Mammary epithelial cell (primary cell): ENCODE measurements at regions of chr20 and their contacts with region 1.

Region 1: DNA sequence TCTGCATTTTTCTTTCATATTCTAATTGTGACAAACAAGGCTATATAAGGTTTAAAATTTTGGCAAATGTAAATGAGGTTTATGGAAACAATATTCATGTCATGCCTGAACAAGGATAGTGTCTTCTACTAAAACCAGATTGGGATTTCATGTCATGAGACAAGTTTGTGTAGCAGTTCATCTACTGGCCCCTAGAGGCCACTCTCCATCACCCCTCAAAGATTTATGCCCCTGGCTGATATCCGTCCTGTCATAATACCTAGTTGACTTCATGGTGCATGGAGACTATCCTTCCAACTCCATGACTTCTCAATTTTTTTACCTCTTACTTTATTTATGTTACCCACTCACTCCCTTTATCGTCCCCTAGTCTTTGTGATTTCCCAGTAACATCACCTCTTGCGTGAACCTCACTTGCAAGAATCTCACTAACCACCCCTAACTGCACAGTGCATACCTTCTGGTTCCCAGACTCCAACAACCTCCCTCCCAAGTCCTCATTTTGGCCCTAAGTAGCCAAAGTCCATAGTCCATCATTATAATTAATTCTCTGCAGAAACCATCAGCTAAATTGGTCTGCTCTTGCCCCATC is 179.8 kb downstream of the TASP1 start:
- DNase-seq: peak; percentile 35
- H3K4me3 ChIP-seq: no peak overlapping the region
- H3K27ac ChIP-seq: no peak overlapping the region
- H3K4me1 ChIP-seq: peaks cover 8% of the 10 kb centered on the region
- H3K27me3 ChIP-seq: no peaks in the 10 kb centered on the region
- CTCF ChIP-seq: peak; percentile 85 to 91

Region 2: GRCh38 chr20:13325033-13325432 is 133.9 kb before region 1 on chr20:
- CTCF ChIA-PET with region 1: interaction called, 3 read pairs
- dilution Hi-C with region 1: no loop called
- in situ Hi-C with region 1: no loop called
- intact Hi-C with region 1: loop called (anchors 5 kb)
- DNase-seq: no peak
- H3K4me3 ChIP-seq: no peak overlapping the region
- H3K27ac ChIP-seq: no peak overlapping the region
- H3K4me1 ChIP-seq: no peaks in the 10 kb centered on the region
- H3K27me3 ChIP-seq: no peaks in the 10 kb centered on the region
- CTCF ChIP-seq: peak; percentile 37 to 72

Region 3: DNA sequence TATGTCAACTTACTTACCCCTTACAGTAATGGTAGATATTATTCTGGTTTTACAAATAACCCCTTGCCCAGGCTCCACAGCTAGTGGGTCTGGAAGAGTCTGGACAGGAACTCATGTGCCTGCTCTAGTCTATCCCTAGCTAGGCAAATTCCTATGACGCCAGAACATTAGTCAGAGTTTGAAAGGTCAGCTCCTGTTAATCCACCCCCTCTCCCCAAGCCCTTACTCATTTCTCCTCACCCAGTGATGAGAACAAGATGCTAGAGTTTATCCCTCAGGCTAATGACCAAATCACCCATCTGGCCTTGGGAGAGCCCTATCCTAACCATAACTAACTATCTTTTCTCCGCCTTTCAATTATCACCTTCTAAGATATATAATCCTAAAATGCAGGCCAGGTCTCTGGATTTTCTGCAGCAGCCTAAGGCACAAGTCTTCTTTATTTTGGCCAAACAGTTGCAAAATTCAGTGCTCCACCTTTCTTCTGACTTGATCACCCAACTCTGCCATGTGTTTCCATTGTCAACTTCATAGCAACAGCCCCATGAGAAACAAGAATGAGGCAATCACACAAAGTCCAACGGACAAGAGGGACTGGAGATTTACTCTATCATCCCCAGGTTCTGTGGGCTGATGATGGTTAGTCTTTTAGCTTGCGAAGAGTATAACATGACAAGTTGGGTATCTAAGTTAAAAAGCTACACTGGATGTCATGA is 66.4 kb after region 1 on chr20:
- CTCF ChIA-PET with region 1: no interaction called
- dilution Hi-C with region 1: no loop called
- in situ Hi-C with region 1: no loop called
- intact Hi-C with region 1: no loop called
- DNase-seq: peak; percentile 92
- H3K4me3 ChIP-seq: no peak overlapping the region
- H3K27ac ChIP-seq: peak overlapping the region; percentile 53
- H3K4me1 ChIP-seq: peaks cover 30% of the 10 kb centered on the region
- H3K27me3 ChIP-seq: no peaks in the 10 kb centered on the region
- CTCF ChIP-seq: no peak

Region 4: GRCh38 chr20:13771853-13772453 is 313.0 kb after region 1 on chr20:
- CTCF ChIA-PET with region 1: no interaction called
- dilution Hi-C with region 1: no loop called
- in situ Hi-C with region 1: no loop called
- intact Hi-C with region 1: loop called (anchors 5 kb)
- DNase-seq: no peak
- H3K4me3 ChIP-seq: no peak overlapping the region
- H3K27ac ChIP-seq: no peak overlapping the region
- H3K4me1 ChIP-seq: no peaks in the 10 kb centered on the region
- H3K27me3 ChIP-seq: no peaks in the 10 kb centered on the region
- CTCF ChIP-seq: peak; percentile 46 to 49